Pancreas (tissue), 10 donors: ENCODE measurements at regions of chr1 and their contacts with region 1.

Region 1: DNA sequence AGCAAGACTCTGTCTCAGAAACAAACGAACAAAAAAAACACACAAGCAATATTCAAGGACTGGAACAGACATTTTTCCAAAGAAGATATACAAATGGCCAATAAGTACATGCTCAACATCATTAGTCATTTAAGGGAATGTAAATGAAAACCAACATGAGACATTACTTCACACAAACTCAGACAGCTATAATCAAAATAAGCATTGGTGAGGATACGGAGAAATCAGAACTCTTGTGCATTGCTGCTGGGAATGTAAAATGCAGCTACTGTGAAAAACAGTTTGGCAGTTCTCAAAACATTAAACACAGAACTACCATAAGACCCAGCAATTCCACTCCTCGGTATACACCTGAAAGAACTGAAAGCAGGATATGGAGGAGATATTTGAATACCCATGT is 15.4 kb downstream of the NOL9 start:
- DNase-seq: no peak
- ATAC-seq: no peak
- H3K4me3 ChIP-seq: no peak overlapping the region
- H3K27ac ChIP-seq: no peak overlapping the region
- H3K4me1 ChIP-seq: no peaks in the 10 kb centered on the region
- H3K27me3 ChIP-seq: no peaks in the 10 kb centered on the region
- CTCF ChIP-seq: no peak

Region 2: DNA sequence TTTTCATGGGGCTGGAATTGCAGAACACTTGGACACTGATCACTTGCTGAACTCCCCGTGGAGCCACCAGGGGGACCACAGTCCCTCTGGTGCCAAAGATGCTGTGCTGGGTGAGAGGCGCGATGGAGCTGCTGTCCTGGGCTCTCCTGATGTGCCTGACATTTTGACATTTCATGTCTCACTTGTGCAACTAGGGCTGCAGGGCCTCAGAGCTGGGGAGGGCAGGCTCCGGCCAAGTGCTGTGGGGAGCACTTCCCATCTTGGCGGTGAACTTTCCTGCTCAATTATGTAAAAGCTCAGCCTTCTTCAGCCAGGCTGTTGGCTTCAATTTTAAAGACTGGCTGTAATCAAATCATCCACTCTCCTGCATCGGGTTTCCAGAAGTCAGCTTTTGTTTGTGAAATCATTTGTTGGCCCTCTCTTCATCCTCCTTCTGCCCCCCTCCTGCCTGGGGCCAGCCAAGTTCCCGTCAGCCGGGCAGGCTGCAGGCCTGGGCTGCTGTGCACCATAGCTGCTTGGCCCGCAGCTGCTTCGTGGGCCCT is 456.5 kb before region 1 on chr1:
- intact Hi-C with region 1: no loop called
- DNase-seq: no peak
- ATAC-seq: peak in 2 of 4 donors; percentile 30 to 48
- H3K4me3 ChIP-seq: no peak overlapping the region
- H3K27ac ChIP-seq: no peak overlapping the region
- H3K4me1 ChIP-seq: no peaks in the 10 kb centered on the region
- H3K27me3 ChIP-seq: no peaks in the 10 kb centered on the region
- CTCF ChIP-seq: no peak

Region 3: GRCh38 chr1:6448749-6449631 is 90.0 kb before region 1 on chr1:
- intact Hi-C with region 1: no loop called
- DNase-seq: no peak
- ATAC-seq: peak in 3 of 4 donors; percentile 21 to 26 (median 24)
- H3K4me3 ChIP-seq: no peak overlapping the region
- H3K27ac ChIP-seq: no peak overlapping the region
- H3K4me1 ChIP-seq: peaks cover 0 to 3% (median 0%) of the 10 kb centered on the region in 3 donors
- H3K27me3 ChIP-seq: peaks cover 0 to 4% (median 0%) of the 10 kb centered on the region in 4 donors
- CTCF ChIP-seq: no peak

Region 4: DNA sequence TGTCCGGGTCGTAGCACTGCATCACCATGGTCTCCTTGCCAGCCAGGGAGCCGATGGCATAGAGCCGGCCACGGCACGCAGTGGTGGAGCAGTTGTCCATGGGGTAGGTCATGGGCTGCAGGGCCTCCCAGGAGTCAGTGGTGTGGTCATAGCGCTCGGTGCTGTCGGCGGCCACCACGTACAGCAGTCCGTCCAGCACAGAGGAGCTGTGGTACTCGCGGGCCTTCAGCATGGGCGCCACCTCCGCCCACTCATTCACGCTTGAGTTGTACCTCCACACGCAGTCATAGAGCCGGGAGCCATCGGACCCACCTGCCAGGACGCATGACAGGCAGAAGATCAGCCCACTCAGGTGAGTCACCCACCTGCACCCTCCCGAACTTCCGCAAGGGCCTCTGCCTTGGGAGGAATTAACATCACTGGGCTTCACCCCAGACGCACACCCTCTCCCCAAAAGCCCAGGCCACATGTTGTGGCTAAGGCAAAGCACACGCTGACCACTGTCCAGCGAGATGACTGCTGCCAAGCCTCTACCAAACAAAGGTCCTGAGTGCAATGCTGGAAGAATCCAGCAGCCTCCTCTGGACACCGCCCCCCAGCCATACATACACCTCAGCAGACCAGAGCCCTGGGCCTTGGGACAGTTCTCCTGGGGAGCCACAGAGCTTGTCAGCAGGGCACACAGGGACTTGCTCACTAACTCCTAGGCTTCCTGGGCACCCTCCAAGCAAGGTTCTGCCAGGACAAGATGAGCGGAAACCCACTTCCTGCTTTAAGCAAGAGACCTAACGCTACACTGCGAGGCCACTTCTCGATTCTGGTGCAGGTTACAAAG is 60.4 kb after region 1 on chr1:
- intact Hi-C with region 1: loop called in 1 of 3 experiments (anchors 10 kb)
- DNase-seq: peak in 2 of 6 donors; percentile 37 to 79
- ATAC-seq: no peak
- H3K4me3 ChIP-seq: peak overlapping the region in 3 of 4 donors; percentile 63 to 95 (median 83)
- H3K27ac ChIP-seq: peak overlapping the region in 1 of 4 donors; percentile 94
- H3K4me1 ChIP-seq: peaks cover 8 to 40% (median 8%) of the 10 kb centered on the region in 3 donors
- H3K27me3 ChIP-seq: no peaks in the 10 kb centered on the region
- CTCF ChIP-seq: no peak

Region 5: DNA sequence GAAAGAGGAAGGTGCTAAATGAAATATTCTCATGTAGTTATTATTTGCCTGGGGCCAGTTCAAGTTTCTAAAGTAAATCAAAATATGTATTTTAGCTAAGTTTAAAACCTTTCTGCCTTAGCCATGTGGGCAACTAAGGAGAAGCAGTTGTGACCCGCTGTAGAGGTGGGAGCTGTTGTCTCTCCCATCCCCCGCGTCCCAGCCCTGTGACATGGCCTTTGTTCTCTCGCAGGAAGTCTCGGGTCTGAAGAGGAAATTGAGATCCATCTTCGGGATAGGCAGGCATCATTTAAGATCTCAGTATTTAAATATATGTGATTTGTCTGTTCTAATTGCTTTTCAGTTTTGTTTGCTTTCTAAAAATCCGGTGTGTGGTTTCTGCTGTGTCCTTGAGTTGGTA is 367.8 kb after region 1 on chr1:
- intact Hi-C with region 1: no loop called
- DNase-seq: no peak
- ATAC-seq: no peak
- H3K4me3 ChIP-seq: no peak overlapping the region
- H3K27ac ChIP-seq: no peak overlapping the region
- H3K4me1 ChIP-seq: peaks cover 0 to 6% (median 4%) of the 10 kb centered on the region in 3 donors
- H3K27me3 ChIP-seq: no peaks in the 10 kb centered on the region
- CTCF ChIP-seq: no peak